ENCODE measurements at regions of chr14 and their contacts with region 1.

Region 1: DNA sequence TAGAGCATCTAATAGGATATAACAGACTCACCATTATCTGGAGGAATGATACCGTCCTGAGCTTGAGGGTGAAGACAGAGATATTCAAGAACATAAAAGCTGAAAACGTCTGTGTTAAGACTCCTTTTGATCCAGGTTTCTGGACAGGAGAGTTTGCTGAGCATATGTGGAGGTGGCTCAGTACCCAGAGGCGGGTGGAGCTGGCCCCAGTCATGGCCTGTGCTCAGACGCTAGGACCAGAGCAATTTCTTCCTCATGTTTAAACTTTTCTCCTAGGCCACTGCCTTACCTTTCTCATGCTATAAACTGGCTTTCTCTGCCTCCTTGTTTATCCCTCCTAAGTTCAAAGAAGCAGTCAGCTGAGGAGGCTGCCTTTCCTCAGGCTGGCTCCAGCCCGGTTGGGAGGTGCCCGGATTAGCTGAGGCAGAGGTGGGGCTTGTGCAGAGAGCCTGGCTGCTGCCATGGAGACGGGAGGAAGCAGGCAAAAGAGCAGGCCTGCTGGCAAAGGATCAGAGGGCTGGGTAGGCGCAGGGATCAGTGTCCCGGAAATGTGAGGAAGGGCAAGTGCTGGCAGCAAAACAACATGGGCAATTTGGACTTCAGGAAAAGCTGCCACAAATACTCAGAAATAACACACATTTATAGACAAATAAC is 13.7 kb downstream of the COA8 start:
- DNase-seq: peak; percentile 87
- H3K4me3 Mint-ChIP-seq: no peak overlapping the region
- H3K27ac Mint-ChIP-seq: peak overlapping the region; percentile 36
- H3K4me1 Mint-ChIP-seq: peaks cover 18% of the 10 kb centered on the region
- H3K27me3 Mint-ChIP-seq: no peaks in the 10 kb centered on the region
- CTCF ChIP-seq: no peak

Region 2: GRCh38 chr14:103488960-103489359 is 87.5 kb before region 1 on chr14:
- CTCF ChIA-PET with region 1: no interaction called
- intact Hi-C with region 1: no loop called
- DNase-seq: no peak
- H3K4me3 Mint-ChIP-seq: no peak overlapping the region
- H3K27ac Mint-ChIP-seq: no peak overlapping the region
- H3K4me1 Mint-ChIP-seq: no peaks in the 10 kb centered on the region
- H3K27me3 Mint-ChIP-seq: no peaks in the 10 kb centered on the region
- CTCF ChIP-seq: no peak

Region 3: DNA sequence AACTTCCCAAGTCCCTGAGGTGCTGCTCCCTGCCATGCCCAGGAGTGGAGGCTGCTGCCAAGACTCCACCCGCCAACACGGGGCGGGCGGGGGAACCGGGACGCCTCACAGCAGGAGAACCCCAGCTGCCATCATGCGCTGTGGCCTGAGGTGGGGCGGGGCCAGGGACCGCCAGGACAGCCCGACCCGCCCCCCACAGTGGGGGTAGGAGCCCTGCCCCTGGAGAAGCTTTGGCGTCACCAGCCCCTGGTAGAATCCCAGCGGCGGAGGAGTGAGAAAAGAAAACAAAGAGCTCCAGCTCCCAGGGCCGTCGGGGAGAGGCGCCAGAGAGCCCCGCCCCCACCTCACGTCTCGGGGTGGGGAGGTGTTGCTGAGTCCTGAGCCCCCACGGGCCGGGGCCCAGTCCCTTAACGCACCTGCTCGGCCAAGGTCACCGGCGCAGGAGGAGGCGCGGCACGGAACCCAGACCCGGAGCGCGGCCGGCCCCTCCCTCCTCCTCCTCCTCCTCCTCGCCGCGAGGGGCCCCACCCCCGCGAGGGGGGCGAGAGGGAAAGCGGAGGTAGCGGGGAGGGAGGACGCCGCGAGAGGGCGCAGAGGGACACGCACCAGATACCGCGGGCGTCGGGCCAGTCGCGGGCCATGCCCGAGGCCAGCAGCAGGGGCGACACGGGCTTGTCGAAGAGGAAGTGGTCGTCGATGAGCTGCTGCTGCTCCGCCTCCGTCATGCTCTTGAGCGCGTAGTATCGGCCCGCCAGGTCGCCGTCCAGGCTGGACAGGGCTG is 55.7 kb before region 1 on chr14:
- CTCF ChIA-PET with region 1: no interaction called
- intact Hi-C with region 1: no loop called
- DNase-seq: peak; percentile 62
- H3K4me3 Mint-ChIP-seq: peak overlapping the region; percentile 40
- H3K27ac Mint-ChIP-seq: no peak overlapping the region
- H3K4me1 Mint-ChIP-seq: peaks cover 19% of the 10 kb centered on the region
- H3K27me3 Mint-ChIP-seq: no peaks in the 10 kb centered on the region
- CTCF ChIP-seq: peak; percentile 56

Region 4: DNA sequence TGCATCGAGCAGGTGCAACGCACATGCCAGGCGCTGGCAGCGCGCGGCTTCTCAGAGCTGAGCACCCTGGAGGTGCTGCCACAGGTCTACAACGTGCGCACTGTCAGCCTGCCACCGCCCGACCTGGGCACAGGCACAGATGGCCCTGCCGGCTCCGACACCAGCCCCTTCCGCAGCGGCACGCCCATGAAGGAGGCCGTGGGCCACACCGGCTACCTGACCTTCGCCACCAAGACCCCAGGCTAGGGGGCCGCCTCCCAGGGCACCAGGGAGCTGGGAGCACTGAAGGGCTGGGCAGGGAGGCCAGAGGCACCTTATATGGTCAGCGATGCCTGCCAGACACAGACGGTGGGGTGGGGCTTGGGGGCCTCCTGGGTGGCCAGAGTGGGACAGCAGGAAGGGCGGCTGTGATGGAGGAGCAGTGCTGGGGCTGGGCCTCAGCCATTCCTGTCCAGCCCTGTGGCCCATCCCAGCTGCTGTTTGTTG is 41.9 kb before region 1 on chr14:
- CTCF ChIA-PET with region 1: no interaction called
- intact Hi-C with region 1: no loop called
- DNase-seq: no peak
- H3K4me3 Mint-ChIP-seq: no peak overlapping the region
- H3K27ac Mint-ChIP-seq: no peak overlapping the region
- H3K4me1 Mint-ChIP-seq: no peaks in the 10 kb centered on the region
- H3K27me3 Mint-ChIP-seq: no peaks in the 10 kb centered on the region
- CTCF ChIP-seq: no peak

Region 5: GRCh38 chr14:103628684-103629502 is 52.4 kb after region 1 on chr14 and contains the start of gene KLC1:
- CTCF ChIA-PET with region 1: no interaction called
- intact Hi-C with region 1: loop called (anchors 10 kb)
- DNase-seq: peak; percentile 87
- H3K4me3 Mint-ChIP-seq: peak within 1 kb of the TSS; percentile 79
- H3K27ac Mint-ChIP-seq: peak within 1 kb of the TSS; percentile 72
- H3K4me1 Mint-ChIP-seq: peaks cover 25% of the 10 kb centered on the region
- H3K27me3 Mint-ChIP-seq: no peaks in the 10 kb centered on the region
- CTCF ChIP-seq: no peak
- total RNA-seq, gene KLC1: 124 and 128 TPM in 2 replicates

Region 6: DNA sequence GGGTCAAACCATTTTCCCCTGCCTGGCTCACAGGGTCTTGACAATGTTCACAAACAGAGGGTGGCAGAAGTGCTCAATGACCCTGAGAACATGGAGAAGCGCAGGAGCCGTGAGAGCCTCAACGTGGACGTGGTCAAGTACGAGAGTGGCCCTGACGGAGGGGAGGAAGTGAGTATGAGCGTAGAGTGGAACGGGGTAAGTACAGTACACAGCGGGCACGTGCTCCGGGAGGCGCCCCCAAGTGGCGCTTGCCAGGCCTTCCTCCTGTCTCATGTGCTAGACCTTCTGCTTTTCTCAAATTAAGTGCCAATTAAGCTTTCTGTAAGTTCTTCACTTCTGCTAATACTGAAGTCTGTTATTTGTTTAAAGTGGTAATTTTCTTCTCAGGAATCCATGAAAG is 102.9 kb after region 1 on chr14:
- CTCF ChIA-PET with region 1: interaction called, 7 read pairs
- intact Hi-C with region 1: loop called (anchors 10 kb)
- DNase-seq: peak; percentile 24
- H3K4me3 Mint-ChIP-seq: no peak overlapping the region
- H3K27ac Mint-ChIP-seq: no peak overlapping the region
- H3K4me1 Mint-ChIP-seq: no peaks in the 10 kb centered on the region
- H3K27me3 Mint-ChIP-seq: no peaks in the 10 kb centered on the region
- CTCF ChIP-seq: peak; percentile 39

Region 7: DNA sequence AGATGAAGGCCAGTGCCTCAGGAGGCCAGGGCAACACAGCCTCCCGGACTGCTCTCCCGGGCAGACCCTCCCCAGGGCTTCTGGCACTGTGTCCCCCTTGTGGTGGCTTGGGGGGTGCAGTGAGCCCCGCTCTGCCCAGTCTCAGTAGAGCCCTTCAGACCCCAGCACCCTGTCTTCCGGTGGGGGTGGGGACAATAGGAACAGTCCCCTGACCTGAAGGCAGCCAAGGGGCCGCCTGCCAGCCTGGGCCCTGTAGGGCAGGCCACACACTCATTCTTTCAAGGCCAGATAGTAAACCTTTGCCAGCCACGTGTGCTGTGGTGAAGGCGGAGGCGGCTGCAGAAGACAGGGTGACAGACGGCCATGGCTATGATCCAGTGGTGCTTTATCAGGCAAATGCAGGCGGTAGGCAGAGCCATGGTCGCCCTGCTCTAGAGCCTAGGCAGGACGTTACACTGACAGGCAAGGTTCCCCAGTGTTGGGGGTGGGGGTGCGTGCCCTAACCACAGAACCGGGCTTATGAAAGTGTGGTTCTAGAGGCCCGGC is 154.1 kb after region 1 on chr14:
- CTCF ChIA-PET with region 1: no interaction called
- intact Hi-C with region 1: no loop called
- DNase-seq: no peak
- H3K4me3 Mint-ChIP-seq: no peak overlapping the region
- H3K27ac Mint-ChIP-seq: no peak overlapping the region
- H3K4me1 Mint-ChIP-seq: no peaks in the 10 kb centered on the region
- H3K27me3 Mint-ChIP-seq: no peaks in the 10 kb centered on the region
- CTCF ChIP-seq: peak; percentile 35